ENCODE measurements at regions of chr1 and their contacts with region 1.

Region 1: GRCh38 chr1:181021811-181022434 is 747 bp downstream of the STX6 start:
- DNase-seq: peak; percentile 29 to 84 (median 62)

Region 2: DNA sequence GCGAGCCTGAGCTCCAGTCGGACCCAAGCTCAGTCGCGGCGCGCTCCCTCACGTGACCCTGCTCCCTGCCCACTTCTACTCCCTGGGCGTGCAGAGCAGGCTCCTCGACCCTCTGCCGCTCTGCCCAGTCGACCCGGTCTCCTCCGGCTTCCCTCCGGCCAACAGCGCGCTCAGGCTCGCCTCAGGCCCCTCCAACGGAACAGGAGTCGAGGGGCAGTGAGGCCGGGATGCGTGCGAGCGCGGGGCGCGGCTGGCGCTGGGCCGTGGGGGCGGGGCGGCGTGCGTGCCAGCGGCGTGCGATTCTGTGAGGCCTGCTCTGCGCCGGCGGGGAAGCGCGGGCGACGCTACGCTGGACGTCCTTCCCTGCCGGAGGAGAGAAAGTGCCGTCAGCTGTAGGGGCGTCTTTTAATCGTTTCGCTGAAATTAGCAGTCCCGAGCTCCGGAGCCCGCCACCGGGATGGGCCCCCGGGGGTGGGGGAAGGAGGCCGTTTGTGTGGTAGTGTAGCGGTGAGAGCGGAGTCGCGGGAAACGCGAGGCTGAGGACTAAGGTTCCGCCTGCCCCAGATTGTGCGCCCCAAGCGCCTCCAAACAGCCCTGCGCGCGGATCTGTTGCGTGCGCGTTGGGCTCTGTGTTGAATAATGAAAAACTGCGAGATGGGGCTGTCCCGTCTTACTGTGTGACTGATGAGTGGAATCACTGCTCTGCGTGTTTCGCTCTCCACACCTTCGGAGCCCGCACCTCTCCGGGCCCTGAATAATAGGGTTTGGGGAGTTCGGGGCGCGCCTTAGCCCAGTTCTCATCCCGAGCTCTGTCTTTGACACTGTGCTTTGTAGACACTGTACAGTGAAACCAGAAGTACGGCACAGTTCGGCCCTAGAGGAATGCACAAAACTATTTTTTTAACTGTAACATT is 519.3 kb before region 1 on chr1 and contains the start of gene ACBD6:
- intact Hi-C with region 1: loop called (anchors 10 kb)
- DNase-seq: peak; percentile 78 to 95 (median 88)

Region 3: GRCh38 chr1:180912801-180913565 is 108.9 kb before region 1 on chr1 and contains the start of gene KIAA1614:
- intact Hi-C with region 1: loop called (anchors 10 kb)
- DNase-seq: peak in 36 of 42 donors; percentile 20 to 73 (median 44)

Region 4: GRCh38 chr1:180956051-180956501 is 65.8 kb before region 1 on chr1:
- intact Hi-C with region 1: loop called (anchors 5 kb)
- DNase-seq: peak in 6 of 42 donors; percentile 11 to 41 (median 29)

Measured in head of caudate nucleus (tissue), 42 donors.